ENCODE measurements at regions of chr19 and their contacts with region 1.

Region 1: DNA sequence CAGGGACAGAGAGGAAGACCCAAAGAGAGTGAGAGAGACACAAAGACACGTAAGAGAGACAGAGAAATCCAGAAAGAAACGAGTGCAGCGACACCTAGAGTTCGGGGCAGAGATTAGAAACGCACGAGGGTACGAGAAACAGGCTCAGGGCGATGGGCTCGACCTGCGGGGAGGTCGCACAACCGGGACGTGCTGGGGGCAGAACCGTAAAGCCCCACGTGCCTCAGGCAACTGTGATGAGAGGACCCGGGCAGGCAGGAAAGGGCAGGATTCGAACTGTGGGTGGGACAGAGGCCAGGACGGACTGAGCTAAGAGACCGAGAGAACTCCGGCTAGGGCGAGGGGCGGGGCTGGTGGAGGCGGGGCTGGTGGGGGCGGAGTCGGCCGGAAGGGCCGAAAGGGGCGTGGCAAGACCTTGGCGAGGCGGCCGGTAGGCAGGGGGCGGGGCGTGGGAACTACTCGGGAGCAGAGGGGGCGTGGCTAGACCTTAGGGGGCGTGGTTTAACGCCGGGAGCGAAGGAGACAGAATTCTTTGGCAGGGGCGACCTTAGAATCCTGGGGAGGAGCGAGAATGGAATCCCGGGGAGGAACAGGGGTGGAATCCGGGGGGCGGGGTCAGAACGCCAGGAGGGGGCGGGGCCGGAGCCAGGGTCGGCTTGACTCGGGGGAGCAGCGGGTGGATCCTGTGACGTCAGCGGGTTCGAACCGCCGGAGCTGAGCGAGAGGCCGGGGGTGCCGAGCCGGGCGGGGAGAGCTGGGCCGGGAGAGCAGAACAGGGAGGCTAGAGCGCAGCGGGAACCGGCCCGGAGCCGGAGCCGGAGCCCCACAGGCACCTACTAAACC is at the start of gene NECTIN2:
- DNase-seq: peak; percentile 100
- ATAC-seq: peak; percentile 73 to 83 (median 82)
- H3K4me3 ChIP-seq: peak within 1 kb of the TSS; percentile 85 to 96 (median 95)
- H3K27ac ChIP-seq: peak within 1 kb of the TSS; percentile 96 to 98 (median 97)
- H3K4me1 ChIP-seq: peaks cover 0 to 39% (median 10%) of the 10 kb centered on the region in 4 donors
- H3K27me3 ChIP-seq: no peaks in the 10 kb centered on the region
- CTCF ChIP-seq: peak; percentile 60 to 72 (median 65)
- POLR2A ChIP-seq: peak; percentile 91
- total RNA-seq, gene NECTIN2: 63.5 to 127 (median 87.4) TPM

Region 2: GRCh38 chr19:44782729-44783128 is 63.1 kb before region 1 on chr19:
- intact Hi-C with region 1: loop called in 1 of 2 experiments (anchors 10 kb)
- DNase-seq: no peak
- ATAC-seq: no peak
- H3K4me3 ChIP-seq: no peak overlapping the region
- H3K27ac ChIP-seq: no peak overlapping the region
- H3K4me1 ChIP-seq: peaks cover 0 to 9% (median 2%) of the 10 kb centered on the region in 4 donors
- H3K27me3 ChIP-seq: no peaks in the 10 kb centered on the region
- CTCF ChIP-seq: peak in 2 of 4 donors; percentile 6 to 7
- POLR2A ChIP-seq: no peak

Region 3: DNA sequence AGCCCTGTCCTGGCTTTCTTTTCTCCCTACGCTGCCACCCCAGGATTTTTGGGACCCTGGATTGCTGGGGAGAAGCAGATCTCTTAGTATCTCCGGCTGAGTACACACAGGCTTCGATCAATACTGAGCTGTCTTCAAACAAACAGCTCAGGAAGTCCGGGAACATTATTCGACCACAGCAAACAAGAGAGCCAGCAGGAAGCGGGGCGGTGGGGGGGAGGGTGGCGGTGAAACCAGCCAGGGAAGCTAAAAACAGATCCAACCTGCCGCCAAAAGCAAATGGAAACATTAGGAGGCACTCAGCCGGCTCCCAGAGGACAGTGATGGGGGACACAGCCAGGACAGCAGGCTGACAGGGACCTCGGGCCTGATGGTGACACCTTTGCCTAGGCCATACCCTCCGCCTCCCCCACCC is 49.1 kb before region 1 on chr19:
- intact Hi-C with region 1: loop called in 1 of 2 experiments (anchors 10 kb)
- DNase-seq: peak; percentile 78 to 87 (median 79)
- ATAC-seq: peak; percentile 77 to 85 (median 78)
- H3K4me3 ChIP-seq: no peak overlapping the region
- H3K27ac ChIP-seq: peak overlapping the region; percentile 44 to 62 (median 51)
- H3K4me1 ChIP-seq: peaks cover 0 to 27% (median 19%) of the 10 kb centered on the region in 4 donors
- H3K27me3 ChIP-seq: no peaks in the 10 kb centered on the region
- CTCF ChIP-seq: no peak
- POLR2A ChIP-seq: no peak

Region 4: DNA sequence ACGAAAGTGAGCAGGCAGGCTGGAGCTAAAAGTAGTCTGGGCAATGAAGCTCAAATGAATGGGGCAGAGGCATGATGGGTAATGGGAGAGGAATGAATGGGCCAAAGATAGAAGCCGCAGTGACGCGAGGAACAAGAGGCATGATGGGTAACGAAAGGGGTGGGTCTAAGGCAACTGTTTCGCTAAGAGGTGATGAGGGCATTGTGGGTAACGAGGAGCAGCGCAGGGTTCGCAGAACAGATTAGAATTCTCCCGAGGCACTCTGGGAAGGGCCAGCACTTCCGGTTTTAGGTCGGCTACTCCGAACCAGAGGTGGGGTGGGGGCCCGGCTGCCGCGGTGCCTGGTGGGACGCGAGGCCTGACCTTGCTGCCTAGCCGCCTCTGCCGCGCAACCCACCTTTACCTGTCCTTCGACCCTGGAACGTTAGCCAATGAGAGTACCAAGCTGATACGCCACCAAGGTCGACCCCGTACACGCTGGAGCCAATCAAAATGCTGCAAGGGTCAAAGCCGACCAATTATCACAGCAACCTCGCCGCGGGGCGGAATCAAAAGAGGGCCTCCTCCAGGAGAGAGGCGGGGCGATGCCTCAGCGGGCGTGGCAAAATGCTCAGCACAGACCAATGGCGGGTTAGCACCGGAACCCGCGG is 44.7 kb after region 1 on chr19:
- intact Hi-C with region 1: no loop called
- DNase-seq: peak in 1 of 3 donors; percentile 100
- ATAC-seq: peak; percentile 85 to 90 (median 87)
- H3K4me3 ChIP-seq: peak overlapping the region; percentile 27 to 62 (median 46)
- H3K27ac ChIP-seq: peak overlapping the region; percentile 67 to 76 (median 69)
- H3K4me1 ChIP-seq: peaks cover 0 to 23% (median 8%) of the 10 kb centered on the region in 4 donors
- H3K27me3 ChIP-seq: no peaks in the 10 kb centered on the region
- CTCF ChIP-seq: no peak
- POLR2A ChIP-seq: peak; percentile 72

Region 5: GRCh38 chr19:45092747-45093678 is 247.2 kb after region 1 on chr19 and contains the start of gene PPP1R37:
- intact Hi-C with region 1: no loop called
- DNase-seq: peak; percentile 94 to 96 (median 95)
- ATAC-seq: peak; percentile 77 to 85 (median 78)
- H3K4me3 ChIP-seq: peak within 1 kb of the TSS; percentile 99
- H3K27ac ChIP-seq: peak within 1 kb of the TSS; percentile 91 to 96 (median 93)
- H3K4me1 ChIP-seq: peaks cover 0 to 29% (median 4%) of the 10 kb centered on the region in 4 donors
- H3K27me3 ChIP-seq: no peaks in the 10 kb centered on the region
- CTCF ChIP-seq: peak in 3 of 4 donors; percentile 20 to 47 (median 26)
- POLR2A ChIP-seq: peak; percentile 42
- total RNA-seq, gene PPP1R37: 10.1 to 14.3 (median 11.0) TPM

Measured in right lobe of liver (tissue), 6 donors.